ENCODE measurements at regions of chr3 and their contacts with region 1.

Region 1: GRCh38 chr3:149120051-149120972 is 9.1 kb upstream of the HPS3 start:
- DNase-seq: peak; percentile 80
- H3K4me3 ChIP-seq: no peak overlapping the region
- H3K27ac ChIP-seq: no peak overlapping the region
- H3K4me1 ChIP-seq: no peaks in the 10 kb centered on the region
- H3K27me3 ChIP-seq: no peaks in the 10 kb centered on the region
- CTCF ChIP-seq: peak; percentile 21 to 39
- POLR2A ChIP-seq: no peak

Region 2: DNA sequence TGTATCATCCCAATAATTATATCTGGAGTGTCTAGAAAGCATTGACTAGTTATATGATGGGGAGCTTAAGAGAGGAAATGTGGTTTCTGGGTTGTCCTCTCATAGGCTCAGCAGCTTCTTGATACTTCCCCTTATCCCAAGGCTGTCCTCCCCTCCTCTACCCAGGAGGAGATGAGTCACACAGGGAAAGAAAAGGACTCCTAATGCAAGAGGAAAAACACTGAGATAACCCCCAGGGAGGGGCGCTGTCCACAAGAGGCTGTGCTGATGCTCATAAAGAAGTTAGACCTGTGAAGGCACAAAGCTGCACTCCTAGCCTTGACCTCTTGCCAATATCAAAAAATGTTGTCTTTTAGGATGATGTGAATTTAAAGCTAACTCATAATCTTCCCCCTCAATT is 157.8 kb before region 1 on chr3:
- CTCF ChIA-PET with region 1: interaction called, 136 read pairs
- POLR2A ChIA-PET with region 1: no interaction called
- dilution Hi-C with region 1: no loop called
- intact Hi-C with region 1: no loop called
- DNase-seq: peak; percentile 86
- H3K4me3 ChIP-seq: no peak overlapping the region
- H3K27ac ChIP-seq: no peak overlapping the region
- H3K4me1 ChIP-seq: peaks cover 2% of the 10 kb centered on the region
- H3K27me3 ChIP-seq: no peaks in the 10 kb centered on the region
- CTCF ChIP-seq: peak; percentile 8 to 29
- POLR2A ChIP-seq: no peak

Region 3: GRCh38 chr3:149023951-149024350 is 96.4 kb before region 1 on chr3:
- CTCF ChIA-PET with region 1: no interaction called
- POLR2A ChIA-PET with region 1: no interaction called
- dilution Hi-C with region 1: no loop called
- intact Hi-C with region 1: no loop called
- DNase-seq: no peak
- H3K4me3 ChIP-seq: no peak overlapping the region
- H3K27ac ChIP-seq: no peak overlapping the region
- H3K4me1 ChIP-seq: no peaks in the 10 kb centered on the region
- H3K27me3 ChIP-seq: no peaks in the 10 kb centered on the region
- CTCF ChIP-seq: no peak
- POLR2A ChIP-seq: no peak

Region 4: GRCh38 chr3:149258298-149258697 is 138.0 kb after region 1 on chr3:
- CTCF ChIA-PET with region 1: interaction called, 15 read pairs
- POLR2A ChIA-PET with region 1: no interaction called
- dilution Hi-C with region 1: no loop called
- intact Hi-C with region 1: no loop called
- DNase-seq: no peak
- H3K4me3 ChIP-seq: no peak overlapping the region
- H3K27ac ChIP-seq: no peak overlapping the region
- H3K4me1 ChIP-seq: no peaks in the 10 kb centered on the region
- H3K27me3 ChIP-seq: no peaks in the 10 kb centered on the region
- CTCF ChIP-seq: no peak
- POLR2A ChIP-seq: no peak

Region 5: DNA sequence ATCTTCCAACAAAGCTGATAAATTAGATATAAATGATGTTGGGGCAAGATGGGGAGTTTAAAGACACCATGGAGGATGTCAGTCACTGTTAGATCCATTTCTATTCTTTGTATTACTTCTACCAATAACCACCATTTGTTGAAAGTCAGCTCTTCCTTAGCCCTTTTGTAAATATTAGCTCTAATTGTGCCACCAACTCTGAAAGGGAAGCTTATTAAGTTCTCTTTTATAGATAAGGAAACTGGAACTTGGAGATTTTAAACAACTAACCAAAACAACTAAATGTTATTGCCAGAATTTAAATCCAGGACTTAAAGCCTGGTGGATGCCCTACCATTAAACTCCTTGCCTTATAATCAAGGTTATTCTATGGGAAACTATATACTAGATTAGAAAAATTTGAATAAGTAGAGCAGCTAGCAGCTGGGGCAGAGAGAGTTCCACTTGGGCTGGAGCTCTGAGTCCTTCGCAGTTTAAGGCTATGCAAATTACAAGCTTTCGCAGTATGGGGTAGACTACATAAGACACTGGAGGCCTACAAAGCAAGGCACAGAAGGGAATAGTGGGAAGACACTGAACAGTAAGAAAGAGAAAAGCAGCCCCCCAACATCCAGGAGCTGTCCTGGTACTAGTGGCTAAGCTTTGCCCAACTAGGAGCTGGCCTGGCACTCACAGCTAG is 160.5 kb after region 1 on chr3:
- CTCF ChIA-PET with region 1: interaction called, 105 read pairs
- POLR2A ChIA-PET with region 1: no interaction called
- dilution Hi-C with region 1: no loop called
- intact Hi-C with region 1: no loop called
- DNase-seq: no peak
- H3K4me3 ChIP-seq: no peak overlapping the region
- H3K27ac ChIP-seq: no peak overlapping the region
- H3K4me1 ChIP-seq: peaks cover 3% of the 10 kb centered on the region
- H3K27me3 ChIP-seq: no peaks in the 10 kb centered on the region
- CTCF ChIP-seq: no peak
- POLR2A ChIP-seq: no peak

Region 6: DNA sequence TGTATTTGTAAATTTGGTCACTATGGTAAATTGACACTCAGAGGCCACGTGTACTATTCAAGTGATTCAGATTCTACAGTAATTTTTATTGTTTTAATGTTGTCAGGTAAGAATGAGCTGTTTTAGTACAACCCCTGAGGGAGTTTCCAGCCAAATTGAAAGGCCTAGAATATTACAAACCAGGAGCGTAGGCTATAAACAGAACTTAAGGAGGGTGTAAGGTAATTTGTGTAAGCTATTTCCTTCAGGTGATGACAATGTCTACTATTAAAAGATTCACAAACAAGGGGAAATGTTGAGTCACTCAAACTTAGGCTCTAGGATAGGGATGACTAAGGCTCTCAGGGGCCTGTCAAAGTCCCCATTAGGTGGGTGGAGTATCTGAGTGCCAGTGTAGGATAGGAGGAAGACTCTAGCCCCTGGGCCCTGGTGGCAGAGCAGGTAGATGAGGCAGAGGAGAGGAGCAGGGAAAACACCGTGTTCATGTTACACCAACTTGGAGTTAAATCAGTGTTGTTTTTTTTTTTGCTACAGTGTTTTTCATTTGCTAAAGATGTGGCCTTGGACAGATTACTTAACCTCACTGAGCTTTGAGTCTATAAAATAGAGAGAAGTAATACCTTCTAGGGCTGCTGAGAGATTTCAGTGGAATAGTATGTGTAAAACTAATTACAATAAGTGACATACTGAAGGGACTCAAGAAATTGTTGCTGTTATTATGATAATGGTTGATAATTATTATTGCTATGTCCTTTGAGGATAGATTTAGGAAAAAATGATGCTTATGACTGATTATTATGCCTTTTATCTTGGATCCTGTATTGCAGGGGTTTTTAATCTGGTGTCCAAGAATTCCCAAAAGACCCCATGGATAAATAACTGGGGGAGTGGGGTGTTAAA is 246.9 kb after region 1 on chr3:
- CTCF ChIA-PET with region 1: interaction called, 16 read pairs
- POLR2A ChIA-PET with region 1: interaction called, 3 read pairs
- dilution Hi-C with region 1: no loop called
- intact Hi-C with region 1: no loop called
- DNase-seq: peak; percentile 90
- H3K4me3 ChIP-seq: no peak overlapping the region
- H3K27ac ChIP-seq: peak overlapping the region; percentile 39
- H3K4me1 ChIP-seq: peaks cover 52% of the 10 kb centered on the region
- H3K27me3 ChIP-seq: no peaks in the 10 kb centered on the region
- CTCF ChIP-seq: no peak
- POLR2A ChIP-seq: peak; percentile 61

Region 7: DNA sequence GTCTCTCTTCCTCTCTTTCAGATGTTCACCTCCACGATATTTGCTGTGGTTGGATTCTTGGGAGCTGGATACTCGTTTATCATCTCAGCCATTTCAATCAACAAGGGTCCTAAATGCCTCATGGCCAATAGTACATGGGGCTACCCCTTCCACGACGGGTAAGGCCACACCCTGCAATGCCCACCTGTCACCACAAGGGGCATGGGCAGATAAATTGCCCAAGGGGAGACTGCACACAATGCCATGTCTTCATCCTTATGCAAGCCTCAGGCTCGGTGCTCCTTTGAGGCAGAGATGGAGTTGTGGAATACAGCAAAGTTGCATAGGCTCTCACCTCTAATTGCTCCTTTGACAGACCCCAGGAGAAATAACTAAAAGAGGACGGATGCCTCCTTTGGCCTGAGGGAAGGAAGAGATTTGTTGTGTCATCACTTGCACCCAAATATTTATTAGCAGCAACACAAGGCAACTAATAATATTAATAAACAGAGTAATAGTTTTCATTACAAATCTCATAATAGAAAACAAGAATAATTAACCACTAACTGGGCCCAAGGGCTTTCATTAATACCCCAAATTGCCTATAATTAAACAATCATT is 367.4 kb after region 1 on chr3:
- CTCF ChIA-PET with region 1: interaction called, 24 read pairs
- POLR2A ChIA-PET with region 1: no interaction called
- dilution Hi-C with region 1: no loop called
- intact Hi-C with region 1: loop called (anchors 1 kb)
- DNase-seq: no peak
- H3K4me3 ChIP-seq: no peak overlapping the region
- H3K27ac ChIP-seq: no peak overlapping the region
- H3K4me1 ChIP-seq: peaks cover 3% of the 10 kb centered on the region
- H3K27me3 ChIP-seq: no peaks in the 10 kb centered on the region
- CTCF ChIP-seq: peak; percentile 40 to 53
- POLR2A ChIP-seq: no peak

Measured in endothelial cell of umbilical vein (primary cell).